ENCODE measurements at regions of chr12 and their contacts with region 1.

Region 1: DNA sequence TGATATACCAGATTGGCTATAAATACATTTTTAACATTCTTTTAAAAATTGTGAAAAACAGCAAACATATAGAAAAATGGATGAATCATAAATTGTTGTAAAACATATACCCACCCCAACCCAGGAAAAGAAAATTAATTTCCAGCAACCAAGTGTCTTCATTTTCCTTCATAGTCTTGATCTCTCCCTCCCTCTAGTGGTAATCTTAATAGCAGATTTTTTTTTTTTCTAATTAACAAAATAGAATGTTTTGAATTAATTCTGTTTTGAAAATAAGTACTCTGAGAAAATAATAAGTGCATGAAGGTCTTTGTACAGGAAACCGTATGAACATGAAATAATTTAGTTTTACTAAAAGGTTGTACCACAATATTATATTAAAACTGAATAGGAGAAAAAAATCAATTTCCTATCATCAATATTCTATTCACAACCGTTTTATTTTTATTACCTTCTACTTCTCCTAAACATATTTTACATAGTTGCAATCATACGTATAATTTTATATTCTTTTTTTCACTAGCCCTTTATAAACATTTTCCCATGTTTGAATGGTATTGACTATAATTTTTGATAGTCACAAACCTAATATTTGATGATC is 7.0 kb downstream of the ETNK1 start:
- DNase-seq: no peak
- ATAC-seq: no peak
- H3K4me3 ChIP-seq: no peak overlapping the region
- H3K27ac ChIP-seq: no peak overlapping the region
- H3K4me1 ChIP-seq: peaks cover 0 to 55% (median 27%) of the 10 kb centered on the region in 9 donors
- H3K27me3 ChIP-seq: no peaks in the 10 kb centered on the region
- CTCF ChIP-seq: peak; percentile 41 to 80 (median 70)

Region 2: DNA sequence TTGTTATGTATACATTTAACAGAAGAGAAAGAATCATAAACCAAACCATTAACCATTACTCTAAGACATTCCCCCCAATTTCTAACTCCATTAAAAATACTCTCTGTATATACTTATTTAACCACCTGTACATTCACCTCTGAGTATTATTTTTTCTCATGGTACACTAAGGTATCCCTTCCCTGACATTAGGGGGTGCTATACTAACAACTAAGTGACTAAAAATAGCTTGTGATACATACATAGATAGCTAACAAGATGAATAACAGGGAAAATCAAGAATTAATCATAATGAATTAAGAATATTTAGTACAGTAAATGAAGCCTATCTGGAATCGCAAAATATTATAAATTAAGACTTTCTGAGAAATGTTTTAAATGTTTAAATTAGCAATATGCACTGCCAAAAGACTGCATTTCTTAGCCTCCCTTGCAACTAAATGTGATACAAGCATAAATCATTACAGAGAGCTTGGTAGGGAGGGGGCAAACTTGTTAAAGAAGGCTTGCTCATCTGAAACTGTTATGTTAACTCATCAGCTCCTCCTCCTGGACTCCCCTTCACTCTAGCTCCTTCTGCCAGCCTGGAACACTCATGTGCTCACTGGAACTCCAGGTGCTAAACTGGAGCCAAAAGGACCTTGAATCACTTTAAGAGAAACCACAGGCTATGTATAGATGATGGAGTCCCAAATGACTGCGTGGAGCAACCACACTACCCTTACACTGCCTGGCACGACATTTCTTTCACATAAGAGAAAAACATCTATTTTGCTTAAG is 102.5 kb before region 1 on chr12:
- intact Hi-C with region 1: loop called in 1 of 10 experiments (anchors 5 kb)
- DNase-seq: no peak
- ATAC-seq: peak in 3 of 8 donors; percentile 46 to 59 (median 53)
- H3K4me3 ChIP-seq: no peak overlapping the region
- H3K27ac ChIP-seq: no peak overlapping the region
- H3K4me1 ChIP-seq: peaks cover 0 to 11% (median 0%) of the 10 kb centered on the region in 9 donors
- H3K27me3 ChIP-seq: no peaks in the 10 kb centered on the region
- CTCF ChIP-seq: peak in 8 of 9 donors; percentile 5 to 60 (median 46)